ENCODE measurements at regions of chr3 and their contacts with region 1.

Region 1: GRCh38 chr3:182837855-182838454 is 44.7 kb downstream of the ATP11B start:
- DNase-seq: no peak
- ATAC-seq: no peak
- H3K4me3 ChIP-seq: no peak overlapping the region
- H3K4me1 ChIP-seq: no peaks in the 10 kb centered on the region
- CTCF ChIP-seq: no peak

Region 2: GRCh38 chr3:182713743-182714517 is 124.0 kb before region 1 on chr3:
- intact Hi-C with region 1: loop called in 1 of 2 experiments (anchors 10 kb)
- DNase-seq: no peak
- ATAC-seq: peak; percentile 78
- H3K4me3 ChIP-seq: no peak overlapping the region
- H3K4me1 ChIP-seq: peaks cover 7% of the 10 kb centered on the region
- CTCF ChIP-seq: peak; percentile 27

Region 3: DNA sequence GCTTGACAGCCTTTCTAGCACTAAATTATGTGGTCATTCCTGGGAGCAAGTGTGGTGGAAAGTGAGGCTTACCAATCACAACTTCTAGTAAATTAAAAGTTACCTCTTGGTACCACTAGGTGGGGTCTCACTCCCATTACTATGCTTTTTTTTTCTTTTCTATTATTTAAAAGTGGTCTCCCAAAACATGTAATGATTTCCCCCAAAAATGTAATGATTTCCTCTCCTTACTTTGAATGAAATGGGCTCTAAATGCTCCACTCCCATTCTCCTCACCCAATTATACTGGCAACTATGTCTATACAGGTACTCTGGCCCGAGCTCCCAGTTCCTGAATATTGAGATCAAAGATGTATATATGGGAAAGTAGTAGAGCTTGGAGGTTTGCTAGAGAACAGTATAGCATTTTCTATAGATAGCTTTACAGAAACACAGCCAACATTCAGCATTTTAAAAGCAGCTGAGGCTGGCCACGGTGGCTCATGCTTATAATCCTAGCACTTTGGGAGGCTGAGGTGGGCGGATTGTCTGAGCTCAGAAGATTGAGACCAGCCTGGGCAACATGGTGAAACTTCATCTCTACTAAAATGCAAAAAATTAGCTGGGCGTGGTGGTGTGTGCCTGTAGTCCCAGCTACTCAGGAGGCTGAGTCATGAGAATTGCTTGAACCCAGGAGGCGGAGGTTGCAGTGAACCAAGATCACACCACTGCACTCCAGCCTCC is 71.5 kb after region 1 on chr3:
- intact Hi-C with region 1: no loop called
- DNase-seq: no peak
- ATAC-seq: no peak
- H3K4me3 ChIP-seq: no peak overlapping the region
- H3K4me1 ChIP-seq: no peaks in the 10 kb centered on the region
- CTCF ChIP-seq: no peak

Measured in mucosa of descending colon (tissue), 3 donors.